Breast epithelium (tissue), 4 donors: ENCODE measurements at regions of chr2 and their contacts with region 1.

Region 1: GRCh38 chr2:47617028-47617427 is 165.9 kb upstream of the MSH6 start:
- DNase-seq: no peak
- H3K4me3 ChIP-seq: no peak overlapping the region
- H3K27ac ChIP-seq: no peak overlapping the region
- H3K4me1 ChIP-seq: no peaks in the 10 kb centered on the region
- H3K27me3 ChIP-seq: no peaks in the 10 kb centered on the region
- CTCF ChIP-seq: no peak
- POLR2A ChIP-seq: no peak

Region 2: DNA sequence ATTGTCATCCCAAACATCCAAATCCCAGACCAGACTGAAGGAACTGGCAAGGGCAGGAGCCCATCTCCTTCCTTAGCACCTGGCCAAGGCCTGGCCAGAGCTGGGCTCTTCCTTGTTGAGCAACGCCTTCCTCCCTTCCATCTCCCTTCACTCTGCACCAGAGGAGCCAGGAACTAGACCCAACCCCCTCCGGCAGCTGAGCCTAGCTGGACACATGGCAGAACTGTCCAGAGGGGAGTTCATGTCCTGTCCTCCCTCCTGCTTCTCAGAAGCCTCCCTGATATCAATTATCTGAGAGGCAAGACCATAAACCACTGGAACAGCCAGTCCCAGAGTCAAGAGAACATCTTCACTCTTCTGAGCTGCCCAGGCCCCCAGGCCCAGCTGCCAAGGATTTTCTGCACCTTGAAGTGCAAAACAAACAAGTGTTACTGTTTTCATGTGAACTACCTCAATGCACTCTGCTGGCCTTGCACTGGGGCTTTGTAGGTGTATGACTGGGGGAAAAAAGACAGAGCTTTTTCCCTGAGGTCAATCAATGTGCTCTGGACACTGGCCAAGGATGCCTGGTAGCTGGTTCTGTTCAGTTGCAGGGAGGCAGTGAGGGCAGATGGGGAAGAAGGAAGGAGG is 58.3 kb after region 1 on chr2:
- intact Hi-C with region 1: no loop called
- DNase-seq: no peak
- H3K4me3 ChIP-seq: no peak overlapping the region
- H3K27ac ChIP-seq: no peak overlapping the region
- H3K4me1 ChIP-seq: no peaks in the 10 kb centered on the region
- H3K27me3 ChIP-seq: no peaks in the 10 kb centered on the region
- CTCF ChIP-seq: no peak
- POLR2A ChIP-seq: no peak

Region 3: GRCh38 chr2:48865704-48866103 is 1248.7 kb after region 1 on chr2:
- intact Hi-C with region 1: loop called (anchors 5 kb)
- DNase-seq: no peak
- H3K4me3 ChIP-seq: no peak overlapping the region
- H3K27ac ChIP-seq: no peak overlapping the region
- H3K4me1 ChIP-seq: no peaks in the 10 kb centered on the region
- H3K27me3 ChIP-seq: no peaks in the 10 kb centered on the region
- CTCF ChIP-seq: no peak
- POLR2A ChIP-seq: no peak